AG04449 (cell line): ENCODE measurements at regions of chr15 and their contacts with region 1.

Region 1: GRCh38 chr15:57861036-57861638 is 154.6 kb downstream of the POLR2M start:
- DNase-seq: peak; percentile 7
- H3K4me3 ChIP-seq: no peak overlapping the region
- CTCF ChIP-seq: peak; percentile 55

Region 2: DNA sequence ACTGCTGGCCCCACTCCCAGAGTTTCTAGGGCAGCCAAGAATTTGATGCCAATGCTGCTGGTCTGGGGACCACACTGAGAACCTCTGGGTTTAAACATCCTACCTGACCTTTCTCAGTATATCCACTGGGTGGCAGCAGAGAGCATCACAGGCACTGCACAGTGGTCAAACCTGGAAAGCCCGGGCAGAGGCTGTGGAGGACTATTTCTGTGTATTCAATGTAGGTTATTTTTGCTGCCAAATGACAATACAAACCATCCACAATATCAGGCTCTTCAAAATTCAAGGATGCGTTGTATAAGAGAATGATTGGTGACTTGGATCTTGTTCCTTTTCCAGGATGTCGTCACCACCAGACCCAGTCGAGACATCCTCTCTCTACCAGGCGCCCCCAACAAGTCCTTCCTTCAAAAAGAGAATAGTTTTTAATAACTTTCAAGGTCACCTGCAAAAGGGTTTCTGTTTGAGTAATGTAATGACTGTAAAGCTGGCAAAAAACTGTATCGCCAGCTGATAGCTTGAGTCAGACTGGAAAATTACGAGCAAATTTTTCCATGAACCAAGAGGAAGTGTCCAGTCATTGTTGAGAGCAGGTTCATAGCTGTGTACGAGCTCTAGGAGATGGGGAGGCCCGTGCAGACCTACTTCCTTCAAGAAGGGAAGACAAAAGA is 300.0 kb before region 1 on chr15:
- CTCF ChIA-PET with region 1: interaction called, 34 read pairs
- POLR2A ChIA-PET with region 1: no interaction called
- DNase-seq: peak; percentile 10
- H3K4me3 ChIP-seq: no peak overlapping the region
- CTCF ChIP-seq: peak; percentile 87

Region 3: DNA sequence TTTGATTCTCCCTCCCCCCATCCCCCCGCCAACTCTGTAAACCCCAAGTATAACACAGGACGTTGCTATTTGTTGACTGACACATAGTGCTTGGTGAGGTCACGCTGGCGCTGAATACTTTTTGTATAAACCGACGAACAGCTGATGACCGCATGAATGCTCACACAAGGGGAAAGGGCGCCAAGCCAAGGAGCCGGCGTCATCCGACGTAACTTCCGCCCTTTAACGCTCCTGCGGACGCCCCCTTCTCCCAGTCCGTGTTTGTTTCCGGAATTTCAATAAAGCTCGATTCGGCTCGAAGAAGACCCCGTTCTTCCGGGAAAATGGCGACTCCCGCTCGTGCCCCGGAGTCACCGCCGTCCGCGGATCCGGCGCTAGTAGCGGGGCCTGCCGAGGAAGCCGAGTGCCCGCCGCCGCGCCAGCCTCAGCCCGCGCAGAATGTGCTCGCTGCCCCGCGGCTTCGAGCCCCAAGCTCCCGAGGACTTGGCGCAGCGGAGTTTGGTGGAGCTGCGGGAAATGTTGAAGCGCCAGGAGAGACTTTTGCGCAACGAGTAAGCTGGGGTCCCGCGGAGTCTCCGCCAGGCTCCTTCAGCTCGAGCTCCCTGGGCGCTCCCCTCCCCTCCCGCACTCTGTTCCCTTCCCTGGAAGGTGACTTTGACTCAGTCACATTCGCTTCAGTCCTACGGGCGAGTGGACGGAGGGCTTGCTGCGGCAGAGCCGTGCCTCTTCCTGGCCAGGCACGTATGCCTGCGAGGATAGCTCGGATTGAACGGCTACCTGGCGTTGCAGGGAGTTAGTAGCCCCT is 154.5 kb before region 1 on chr15 and contains the start of gene POLR2M:
- CTCF ChIA-PET with region 1: interaction called, 13 read pairs
- POLR2A ChIA-PET with region 1: no interaction called
- DNase-seq: peak; percentile 91
- H3K4me3 ChIP-seq: peak within 1 kb of the TSS; percentile 93
- CTCF ChIP-seq: no peak

Region 4: DNA sequence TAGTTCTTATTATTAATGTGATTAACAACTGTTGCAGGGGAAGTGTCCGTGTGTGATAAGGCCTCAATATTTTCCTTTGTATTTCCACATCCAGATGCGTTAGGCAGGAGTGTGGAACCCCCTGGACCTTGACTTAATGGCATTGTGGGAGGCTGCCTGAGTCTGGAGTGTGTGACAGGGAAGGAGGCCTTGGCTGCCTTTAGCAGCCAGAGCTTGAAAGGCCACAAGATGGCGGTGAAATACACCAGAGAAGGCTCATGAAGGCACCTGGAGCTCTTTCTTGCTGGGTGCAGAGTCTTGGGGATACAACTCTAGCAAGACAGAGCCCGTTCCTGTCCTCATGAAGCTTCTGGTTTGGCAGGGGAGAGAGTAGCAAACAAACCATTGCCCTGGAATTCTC is 117.7 kb before region 1 on chr15:
- CTCF ChIA-PET with region 1: interaction called, 209 read pairs
- POLR2A ChIA-PET with region 1: no interaction called
- DNase-seq: no peak
- H3K4me3 ChIP-seq: no peak overlapping the region
- CTCF ChIP-seq: peak; percentile 3

Region 5: GRCh38 chr15:57873564-57874209 is 12.6 kb after region 1 on chr15:
- CTCF ChIA-PET with region 1: interaction called, 49 read pairs
- POLR2A ChIA-PET with region 1: no interaction called
- DNase-seq: peak; percentile 14
- H3K4me3 ChIP-seq: no peak overlapping the region
- CTCF ChIP-seq: no peak

Region 6: GRCh38 chr15:57932348-57932747 is 71.2 kb after region 1 on chr15:
- CTCF ChIA-PET with region 1: no interaction called
- POLR2A ChIA-PET with region 1: no interaction called
- DNase-seq: no peak
- H3K4me3 ChIP-seq: no peak overlapping the region
- CTCF ChIP-seq: no peak

Region 7: GRCh38 chr15:58002338-58003126 is 141.4 kb after region 1 on chr15:
- CTCF ChIA-PET with region 1: no interaction called
- POLR2A ChIA-PET with region 1: no interaction called
- DNase-seq: no peak
- H3K4me3 ChIP-seq: no peak overlapping the region
- CTCF ChIP-seq: no peak

Region 8: GRCh38 chr15:58115692-58116091 is 254.6 kb after region 1 on chr15:
- CTCF ChIA-PET with region 1: no interaction called
- POLR2A ChIA-PET with region 1: no interaction called
- DNase-seq: no peak
- H3K4me3 ChIP-seq: no peak overlapping the region
- CTCF ChIP-seq: peak; percentile 2